Colonic mucosa (tissue), 4 donors: ENCODE measurements at regions of chr22 and their contacts with region 1.

Region 1: GRCh38 chr22:22877523-22878210 is 9.9 kb upstream of the IGLL5 start:
- DNase-seq: peak; percentile 68
- H3K4me3 ChIP-seq: no peak overlapping the region
- H3K27ac ChIP-seq: no peak overlapping the region
- H3K4me1 ChIP-seq: no peaks in the 10 kb centered on the region
- H3K27me3 ChIP-seq: no peaks in the 10 kb centered on the region
- CTCF ChIP-seq: peak; percentile 76

Region 2: GRCh38 chr22:22848364-22848866 is 29.3 kb before region 1 on chr22:
- intact Hi-C with region 1: loop called (anchors 2 kb)
- DNase-seq: peak; percentile 77
- H3K4me3 ChIP-seq: no peak overlapping the region
- H3K27ac ChIP-seq: no peak overlapping the region
- H3K4me1 ChIP-seq: no peaks in the 10 kb centered on the region
- H3K27me3 ChIP-seq: no peaks in the 10 kb centered on the region
- CTCF ChIP-seq: peak; percentile 92